Caco-2 (cell line): ENCODE measurements at regions of chr15 and their contacts with region 1.

Region 1: DNA sequence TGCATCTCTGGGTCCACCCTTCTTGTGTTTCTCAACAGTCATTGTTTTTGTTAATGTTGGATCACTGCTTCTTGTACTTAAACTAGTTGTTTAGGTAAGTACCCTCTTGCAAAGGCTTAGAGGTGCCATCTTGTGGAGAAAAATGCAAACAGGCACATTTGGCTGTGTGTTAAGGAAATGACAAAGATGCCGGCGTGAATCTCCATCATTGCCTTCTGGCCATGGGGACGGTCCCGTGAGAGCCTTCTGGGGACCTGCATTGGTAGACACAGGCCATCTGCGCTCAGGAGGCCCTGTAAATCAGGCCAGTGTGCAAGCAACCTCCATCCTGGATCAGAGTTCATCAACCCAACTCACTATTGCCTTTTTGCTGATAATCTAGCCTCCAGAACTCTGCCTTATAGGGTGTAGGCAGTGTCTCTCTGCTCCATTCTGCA is 158.6 kb upstream of the NR2E3 start:
- DNase-seq: peak; percentile 59 to 63
- H3K4me3 ChIP-seq: no peak overlapping the region
- H3K4me3 Mint-ChIP-seq: no peak overlapping the region
- H3K27ac Mint-ChIP-seq: no peak overlapping the region
- H3K4me1 ChIP-seq: peaks cover 9% of the 10 kb centered on the region
- H3K4me1 Mint-ChIP-seq: peaks cover 6% of the 10 kb centered on the region
- H3K27me3 ChIP-seq: no peaks in the 10 kb centered on the region
- H3K27me3 Mint-ChIP-seq: no peaks in the 10 kb centered on the region
- CTCF ChIP-seq: peak; percentile 63 to 64

Region 2: DNA sequence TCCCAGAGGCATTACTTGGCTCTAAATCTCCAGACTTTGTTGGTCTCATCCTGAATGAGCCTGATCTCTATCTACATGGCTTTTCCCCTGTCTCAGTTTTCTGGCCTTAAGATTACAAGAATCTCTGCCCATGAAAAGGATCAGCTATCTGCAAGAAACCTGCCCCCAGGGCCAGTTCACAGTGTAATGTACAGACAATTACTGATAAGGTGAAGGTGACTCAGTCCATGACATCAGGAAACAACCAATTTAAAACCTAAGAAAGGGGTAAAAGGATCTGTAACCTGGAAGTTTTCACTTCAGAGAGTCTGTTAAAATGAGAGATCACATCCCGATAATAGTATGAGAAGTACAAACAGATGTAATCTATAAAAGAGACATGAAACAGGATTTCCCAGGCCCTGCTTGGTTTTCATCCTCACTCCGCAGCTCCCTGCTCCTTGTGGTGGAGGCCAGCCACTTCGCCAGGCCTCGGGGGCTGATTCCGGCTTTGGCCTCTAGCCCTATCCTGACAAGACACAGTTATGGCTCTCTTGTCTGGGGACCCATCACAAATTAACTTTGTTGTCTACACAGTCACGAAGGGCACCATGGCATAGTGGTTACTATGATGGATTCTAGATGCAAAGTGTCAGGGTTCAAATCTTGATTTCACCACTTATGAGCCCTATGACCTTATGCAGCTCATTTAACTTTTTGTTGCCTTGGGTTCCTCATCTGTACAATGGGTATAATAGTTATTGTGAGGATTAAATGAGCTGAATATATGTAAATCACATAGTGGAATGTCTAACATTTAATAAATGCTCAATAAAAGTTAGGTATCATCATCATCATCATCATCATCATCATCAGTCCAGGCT is 399.5 kb before region 1 on chr15:
- CTCF ChIA-PET with region 1: no interaction called
- POLR2A ChIA-PET with region 1: no interaction called
- intact Hi-C with region 1: no loop called
- DNase-seq: peak; percentile 87 to 93
- H3K4me3 ChIP-seq: no peak overlapping the region
- H3K4me3 Mint-ChIP-seq: peak overlapping the region; percentile 17
- H3K27ac Mint-ChIP-seq: peak overlapping the region; percentile 47
- H3K4me1 ChIP-seq: peaks cover 40% of the 10 kb centered on the region
- H3K4me1 Mint-ChIP-seq: peaks cover 27% of the 10 kb centered on the region
- H3K27me3 ChIP-seq: no peaks in the 10 kb centered on the region
- H3K27me3 Mint-ChIP-seq: no peaks in the 10 kb centered on the region
- CTCF ChIP-seq: no peak

Region 3: GRCh38 chr15:71575474-71576045 is 76.2 kb before region 1 on chr15:
- CTCF ChIA-PET with region 1: interaction called, 5 read pairs
- POLR2A ChIA-PET with region 1: no interaction called
- intact Hi-C with region 1: loop called (anchors 1 kb)
- DNase-seq: no peak
- H3K4me3 ChIP-seq: no peak overlapping the region
- H3K4me3 Mint-ChIP-seq: no peak overlapping the region
- H3K27ac Mint-ChIP-seq: no peak overlapping the region
- H3K4me1 ChIP-seq: no peaks in the 10 kb centered on the region
- H3K4me1 Mint-ChIP-seq: no peaks in the 10 kb centered on the region
- H3K27me3 ChIP-seq: no peaks in the 10 kb centered on the region
- H3K27me3 Mint-ChIP-seq: no peaks in the 10 kb centered on the region
- CTCF ChIP-seq: peak; percentile 51 to 65

Region 4: DNA sequence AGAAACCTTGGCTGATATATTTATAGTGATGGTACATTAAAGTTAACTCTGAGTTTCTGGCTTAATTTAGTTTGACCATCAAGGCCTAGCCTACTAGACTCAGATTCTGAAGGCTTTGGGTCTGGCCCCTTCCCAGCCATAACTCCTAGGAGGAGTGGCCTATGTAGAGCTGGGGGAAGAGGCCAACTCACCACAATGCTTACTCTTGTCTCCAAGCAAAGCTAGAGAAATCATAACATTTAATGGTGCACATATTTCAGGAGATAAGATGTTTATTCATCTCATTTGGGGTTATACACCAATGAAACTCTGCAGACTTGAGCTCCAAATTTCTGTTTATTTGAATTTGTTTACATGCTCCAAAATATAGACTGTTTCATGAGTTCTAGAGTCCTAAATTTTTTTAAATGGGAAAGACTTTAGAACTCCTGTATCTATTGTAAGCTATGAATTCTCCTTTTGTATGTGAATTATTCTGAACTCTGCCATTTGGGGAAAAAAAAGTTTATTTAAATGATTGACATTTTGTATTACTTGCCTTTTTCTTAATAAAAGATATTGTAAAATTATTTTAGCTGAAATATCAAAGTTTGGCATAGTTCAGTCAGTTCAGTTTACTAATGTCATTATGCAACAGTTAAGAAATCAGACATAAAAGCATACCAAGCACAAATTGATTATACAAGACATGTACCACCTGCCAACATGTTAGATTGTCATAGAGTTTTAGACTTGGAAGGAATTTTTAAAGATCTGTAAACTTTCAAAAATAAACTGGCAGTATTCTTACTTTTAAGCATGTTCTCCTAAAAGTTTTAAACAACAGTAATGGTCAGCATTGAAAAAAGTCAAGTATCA is 15.2 kb after region 1 on chr15:
- CTCF ChIA-PET with region 1: no interaction called
- POLR2A ChIA-PET with region 1: no interaction called
- intact Hi-C with region 1: no loop called
- DNase-seq: no peak
- H3K4me3 ChIP-seq: no peak overlapping the region
- H3K4me3 Mint-ChIP-seq: no peak overlapping the region
- H3K27ac Mint-ChIP-seq: no peak overlapping the region
- H3K4me1 ChIP-seq: peaks cover 14% of the 10 kb centered on the region
- H3K4me1 Mint-ChIP-seq: peaks cover 7% of the 10 kb centered on the region
- H3K27me3 ChIP-seq: no peaks in the 10 kb centered on the region
- H3K27me3 Mint-ChIP-seq: no peaks in the 10 kb centered on the region
- CTCF ChIP-seq: no peak

Region 5: DNA sequence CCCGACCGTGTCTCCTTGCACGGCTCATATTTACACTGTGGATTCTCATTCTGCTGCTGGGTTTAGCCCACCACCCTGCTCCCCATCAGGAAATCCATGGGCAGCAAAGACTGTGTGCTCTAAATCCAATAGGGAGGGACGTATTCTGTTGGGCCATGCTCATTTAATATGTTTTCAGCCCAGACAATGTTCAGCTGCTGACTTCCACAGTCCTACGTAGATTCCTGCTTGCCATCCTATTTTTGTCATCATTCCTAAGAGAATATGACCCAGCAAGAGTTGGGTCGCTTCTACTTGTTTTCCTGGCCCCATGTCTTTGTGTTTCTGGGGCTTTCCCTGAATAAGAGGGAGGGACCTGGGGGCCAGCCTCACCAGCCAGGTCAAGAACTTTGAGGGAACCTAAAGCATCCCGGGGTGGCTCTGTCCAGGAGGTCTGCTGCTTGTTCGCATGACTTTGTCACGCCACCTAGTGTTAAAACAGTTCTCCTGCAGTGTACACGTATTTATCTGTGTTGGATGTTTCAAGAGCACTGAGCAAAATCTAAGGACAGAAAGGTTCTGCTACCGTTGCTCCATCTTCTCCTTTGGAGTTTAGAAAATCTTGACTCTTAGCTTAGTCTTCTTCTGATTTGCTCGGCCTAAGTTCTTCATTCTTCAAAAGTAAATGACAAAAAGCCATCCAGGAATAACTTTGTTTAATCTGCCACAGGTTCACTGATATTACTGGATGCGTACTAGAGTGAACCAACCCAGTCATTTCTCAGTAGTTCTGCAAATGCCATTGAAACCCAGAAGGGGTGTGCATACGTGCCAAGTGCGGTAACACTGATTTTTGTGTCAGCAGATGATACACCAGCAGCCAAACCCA is 78.7 kb after region 1 on chr15:
- CTCF ChIA-PET with region 1: no interaction called
- POLR2A ChIA-PET with region 1: no interaction called
- intact Hi-C with region 1: loop called (anchors 1 kb)
- DNase-seq: peak; percentile 62 to 63
- H3K4me3 ChIP-seq: no peak overlapping the region
- H3K4me3 Mint-ChIP-seq: no peak overlapping the region
- H3K27ac Mint-ChIP-seq: no peak overlapping the region
- H3K4me1 ChIP-seq: peaks cover 16% of the 10 kb centered on the region
- H3K4me1 Mint-ChIP-seq: no peaks in the 10 kb centered on the region
- H3K27me3 ChIP-seq: no peaks in the 10 kb centered on the region
- H3K27me3 Mint-ChIP-seq: no peaks in the 10 kb centered on the region
- CTCF ChIP-seq: peak in 1 of 2 experiments; percentile 67